ENCODE measurements at regions of chr2 and their contacts with region 1.

Region 1: GRCh38 chr2:47339745-47340541 is 63.0 kb upstream of the MSH2 start:
- DNase-seq: no peak
- CTCF ChIP-seq: no peak

Region 2: DNA sequence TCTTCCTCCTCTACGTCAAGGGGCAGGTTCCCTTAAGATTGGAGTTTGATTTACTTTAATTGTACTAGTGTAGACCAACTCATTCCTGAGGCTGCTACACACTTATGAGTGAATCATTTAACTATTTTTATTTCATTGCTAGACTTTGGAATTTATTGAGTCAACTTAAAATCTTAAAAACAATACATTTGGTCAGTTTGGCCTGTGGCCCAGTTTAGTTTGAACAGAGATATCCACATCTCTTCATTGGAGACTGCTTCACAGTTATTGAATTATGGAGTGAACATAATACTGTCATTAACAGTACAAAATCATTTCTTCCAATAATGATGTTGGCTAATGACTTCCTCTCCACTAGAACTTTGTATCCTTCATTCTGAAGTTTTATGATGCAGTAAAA is 150.3 kb before region 1 on chr2:
- in situ Hi-C with region 1: no loop called
- DNase-seq: no peak
- CTCF ChIP-seq: no peak

Region 3: DNA sequence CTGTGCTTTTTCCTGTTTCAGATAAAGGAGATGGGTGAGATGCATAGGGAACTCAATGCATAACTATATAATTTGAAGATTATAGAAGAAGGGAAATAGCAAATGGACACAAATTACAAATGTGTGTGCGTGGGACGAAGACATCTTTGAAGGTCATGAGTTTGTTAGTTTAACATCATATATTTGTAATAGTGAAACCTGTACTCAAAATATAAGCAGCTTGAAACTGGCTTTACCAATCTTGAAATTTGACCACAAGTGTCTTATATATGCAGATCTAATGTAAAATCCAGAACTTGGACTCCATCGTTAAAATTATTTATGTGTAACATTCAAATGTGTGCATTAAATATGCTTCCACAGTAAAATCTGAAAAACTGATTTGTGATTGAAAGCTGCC is 46.6 kb after region 1 on chr2:
- in situ Hi-C with region 1: loop called (anchors 5 kb)
- DNase-seq: peak; percentile 59
- CTCF ChIP-seq: no peak

Region 4: DNA sequence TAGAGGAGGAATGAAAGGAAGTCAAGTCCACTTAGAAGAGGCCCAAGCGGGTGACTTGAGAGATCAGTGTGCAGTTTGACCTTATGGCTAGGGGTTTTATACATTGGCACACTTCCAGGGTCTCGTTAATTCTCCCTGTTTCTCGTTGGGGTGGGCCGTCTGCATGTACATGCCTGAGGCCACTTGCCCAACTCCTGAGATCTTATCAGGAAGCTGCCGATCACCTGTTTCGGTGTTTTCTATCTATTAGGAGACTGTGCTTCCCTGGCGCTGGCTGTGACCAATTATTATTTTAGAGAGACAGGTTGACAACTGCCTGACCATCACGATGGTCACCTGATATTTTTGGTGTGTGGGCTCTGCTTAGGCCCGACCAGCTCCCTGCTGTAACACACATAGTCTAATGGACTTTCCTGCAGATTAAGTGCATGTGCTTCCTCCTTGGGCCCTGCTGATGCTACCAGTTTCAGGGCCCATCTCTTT is 412.0 kb after region 1 on chr2:
- in situ Hi-C with region 1: no loop called
- DNase-seq: no peak
- CTCF ChIP-seq: no peak

Region 5: DNA sequence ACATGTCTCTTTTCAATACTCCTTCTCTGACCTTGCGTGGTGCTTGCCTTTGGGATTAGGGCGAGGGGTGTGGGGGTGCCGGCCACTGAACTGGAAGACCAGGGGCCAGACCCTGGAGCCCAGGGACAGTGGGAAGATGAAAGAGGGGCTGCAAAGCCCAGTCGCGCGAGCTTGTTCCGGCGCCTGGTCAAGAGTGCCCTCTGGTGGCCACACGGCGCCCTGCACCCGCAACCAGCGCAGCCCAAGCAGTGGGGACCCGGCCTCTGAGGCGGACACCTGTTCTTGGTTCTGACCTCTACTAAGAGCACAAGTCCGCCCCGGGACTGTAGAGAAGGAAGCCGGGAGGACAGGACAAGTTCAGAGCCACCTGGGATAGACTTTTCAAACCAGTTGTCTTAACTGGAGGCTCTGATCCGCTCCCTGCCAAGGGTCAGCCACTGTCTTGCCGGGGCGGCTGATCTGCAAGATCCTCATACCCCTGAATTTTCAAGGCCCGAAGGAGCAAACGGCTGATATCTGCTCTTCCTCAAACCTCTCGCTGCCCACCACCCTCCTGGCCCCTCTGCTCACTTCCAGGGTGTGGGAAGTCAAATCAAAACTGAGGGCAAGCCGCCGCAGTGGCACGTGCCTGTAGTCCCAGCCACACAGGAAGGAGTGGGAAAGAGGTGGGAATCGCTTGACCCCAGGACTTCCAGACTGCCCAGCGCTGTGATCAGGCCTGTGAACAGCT is 428.1 kb after region 1 on chr2:
- in situ Hi-C with region 1: loop called (anchors 10 kb)
- DNase-seq: peak; percentile 79
- CTCF ChIP-seq: peak; percentile 99